ENCODE measurements at regions of chr5 and their contacts with region 1.

Region 1: GRCh38 chr5:61331407-61332357 is at the start of gene ZSWIM6:
- DNase-seq: peak; percentile 99
- H3K4me3 ChIP-seq: peak within 1 kb of the TSS; percentile 76 to 99 (median 83)
- H3K27ac ChIP-seq: peak within 1 kb of the TSS; percentile 89
- H3K4me1 ChIP-seq: peaks cover 46% of the 10 kb centered on the region
- H3K27me3 ChIP-seq: no peaks in the 10 kb centered on the region
- CTCF ChIP-seq: no peak
- POLR2A ChIP-seq: peak; percentile 97
- total RNA-seq, gene ZSWIM6: 25.3 and 25.7 TPM in 2 replicates

Region 2: GRCh38 chr5:61055434-61056006 is 276.2 kb before region 1 on chr5:
- CTCF ChIA-PET with region 1: interaction called, 21 read pairs
- POLR2A ChIA-PET with region 1: interaction called, 3 read pairs
- dilution Hi-C with region 1: no loop called
- intact Hi-C with region 1: loop called (anchors 1 kb)
- DNase-seq: peak; percentile 66
- H3K4me3 ChIP-seq: no peak overlapping the region
- H3K27ac ChIP-seq: no peak overlapping the region
- H3K4me1 ChIP-seq: peaks cover 13% of the 10 kb centered on the region
- H3K27me3 ChIP-seq: no peaks in the 10 kb centered on the region
- CTCF ChIP-seq: peak; percentile 50 to 54
- POLR2A ChIP-seq: no peak

Region 3: GRCh38 chr5:61262080-61262479 is 69.6 kb before region 1 on chr5:
- CTCF ChIA-PET with region 1: interaction called, 12 read pairs
- POLR2A ChIA-PET with region 1: no interaction called
- dilution Hi-C with region 1: no loop called
- intact Hi-C with region 1: loop called (anchors 1 kb)
- DNase-seq: no peak
- H3K4me3 ChIP-seq: no peak overlapping the region
- H3K27ac ChIP-seq: no peak overlapping the region
- H3K4me1 ChIP-seq: peaks cover 28% of the 10 kb centered on the region
- H3K27me3 ChIP-seq: no peaks in the 10 kb centered on the region
- CTCF ChIP-seq: no peak
- POLR2A ChIP-seq: no peak

Region 4: GRCh38 chr5:61313960-61314681 is 17.6 kb before region 1 on chr5:
- CTCF ChIA-PET with region 1: interaction called, 20 read pairs
- POLR2A ChIA-PET with region 1: interaction called, 23 read pairs
- dilution Hi-C with region 1: no loop called
- intact Hi-C with region 1: loop called (anchors 1 kb)
- DNase-seq: peak; percentile 97
- H3K4me3 ChIP-seq: no peak overlapping the region
- H3K27ac ChIP-seq: peak overlapping the region; percentile 95
- H3K4me1 ChIP-seq: peaks cover 57% of the 10 kb centered on the region
- H3K27me3 ChIP-seq: no peaks in the 10 kb centered on the region
- CTCF ChIP-seq: no peak
- POLR2A ChIP-seq: peak; percentile 73

Region 5: GRCh38 chr5:61625681-61626621 is 294.3 kb after region 1 on chr5:
- CTCF ChIA-PET with region 1: no interaction called
- POLR2A ChIA-PET with region 1: no interaction called
- dilution Hi-C with region 1: no loop called
- intact Hi-C with region 1: loop called (anchors 5 kb)
- DNase-seq: peak; percentile 51
- H3K4me3 ChIP-seq: peak overlapping the region; percentile 58 to 72 (median 71)
- H3K27ac ChIP-seq: peak overlapping the region; percentile 45
- H3K4me1 ChIP-seq: peaks cover 10% of the 10 kb centered on the region
- H3K27me3 ChIP-seq: no peaks in the 10 kb centered on the region
- CTCF ChIP-seq: no peak
- POLR2A ChIP-seq: no peak